ENCODE measurements at regions of chr6 and their contacts with region 1.

Region 1: GRCh38 chr6:42043787-42044475 is 6.4 kb upstream of the TAF8 start:
- DNase-seq: peak; percentile 86 to 94
- H3K4me3 ChIP-seq: no peak overlapping the region
- H3K27ac ChIP-seq: peak overlapping the region; percentile 90 to 96 (median 95)
- H3K4me1 ChIP-seq: peaks cover 45 to 56% of the 10 kb centered on the region in 2 donors
- H3K27me3 ChIP-seq: no peaks in the 10 kb centered on the region
- CTCF ChIP-seq: peak; percentile 91 to 98 (median 96)
- POLR2A ChIP-seq: no peak

Region 2: GRCh38 chr6:41779793-41780545 is 264.0 kb before region 1 on chr6 and contains the start of gene FRS3:
- intact Hi-C with region 1: loop called (anchors 5 kb)
- DNase-seq: peak; percentile 98 to 99
- H3K4me3 ChIP-seq: peak within 1 kb of the TSS in 2 of 3 donors; percentile 30 to 66
- H3K27ac ChIP-seq: peak within 1 kb of the TSS; percentile 83 to 86 (median 85)
- H3K4me1 ChIP-seq: peaks cover 20% of the 10 kb centered on the region in 2 donors
- H3K27me3 ChIP-seq: no peaks in the 10 kb centered on the region
- CTCF ChIP-seq: peak; percentile 70 to 99 (median 96)
- POLR2A ChIP-seq: peak in 1 of 2 donors; percentile 59
- total RNA-seq, gene FRS3: 4.0 to 6.7 (median 5.8) TPM

Region 3: GRCh38 chr6:41846666-41847237 is 197.2 kb before region 1 on chr6:
- intact Hi-C with region 1: loop called (anchors 5 kb)
- DNase-seq: peak; percentile 66 to 68
- H3K4me3 ChIP-seq: no peak overlapping the region
- H3K27ac ChIP-seq: peak overlapping the region in 2 of 3 donors; percentile 11 to 18
- H3K4me1 ChIP-seq: peaks cover 0 to 7% of the 10 kb centered on the region in 2 donors
- H3K27me3 ChIP-seq: no peaks in the 10 kb centered on the region
- CTCF ChIP-seq: peak; percentile 48 to 94 (median 84)
- POLR2A ChIP-seq: no peak

Region 4: DNA sequence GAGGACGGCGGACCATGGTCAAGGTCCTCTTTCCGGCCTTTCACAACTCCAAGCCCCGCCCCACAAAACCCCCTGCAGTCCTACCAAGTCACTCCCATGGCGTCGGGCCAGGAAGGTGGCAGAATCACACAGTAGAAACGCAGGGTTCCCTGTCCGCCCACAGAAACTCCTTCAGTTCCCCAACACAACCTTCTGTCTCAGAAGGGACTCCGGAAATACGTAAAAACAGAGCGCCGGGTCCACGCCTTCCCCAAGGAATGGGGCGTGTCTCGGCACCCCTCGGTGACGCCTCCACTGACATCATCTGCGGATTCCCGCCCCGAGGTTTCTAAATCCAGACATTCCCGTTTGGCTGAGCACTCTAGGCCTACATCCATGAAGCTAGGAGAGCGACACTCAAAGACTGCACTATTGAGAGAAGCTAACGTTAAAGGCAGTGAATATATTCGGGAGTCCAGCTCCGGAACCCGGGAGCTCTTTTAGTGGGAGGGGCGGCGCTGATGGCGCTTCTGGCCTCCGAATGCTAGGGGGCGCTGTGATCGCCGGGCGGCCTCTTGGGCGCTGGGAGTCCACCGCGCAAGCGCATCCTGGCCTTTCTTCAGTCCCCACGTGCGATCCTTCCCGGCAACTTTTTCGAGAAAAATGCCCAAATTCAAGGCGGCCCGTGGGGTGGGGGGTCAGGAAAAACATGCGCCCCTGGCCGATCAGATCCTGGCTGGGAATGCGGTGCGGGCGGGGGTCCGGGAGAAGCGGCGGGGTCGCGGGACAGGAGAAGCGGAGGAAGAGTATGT is 122.8 kb before region 1 on chr6 and contains the starts of genes BYSL and MED20:
- intact Hi-C with region 1: loop called (anchors 5 kb)
- DNase-seq: peak; percentile 92 to 93
- H3K4me3 ChIP-seq: peak within 1 kb of the TSS; percentile 13 to 85 (median 70)
- H3K27ac ChIP-seq: peak within 1 kb of the TSS; percentile 95 to 97 (median 96)
- H3K4me1 ChIP-seq: peaks cover 14 to 23% of the 10 kb centered on the region in 2 donors
- H3K27me3 ChIP-seq: no peaks in the 10 kb centered on the region
- CTCF ChIP-seq: peak; percentile 87 to 98 (median 97)
- POLR2A ChIP-seq: peak in 1 of 2 donors; percentile 72
- total RNA-seq, gene BYSL: 2.8 to 6.1 (median 4.2) TPM
- total RNA-seq, gene MED20: 20.6 to 27.1 (median 24.3) TPM

Region 5: DNA sequence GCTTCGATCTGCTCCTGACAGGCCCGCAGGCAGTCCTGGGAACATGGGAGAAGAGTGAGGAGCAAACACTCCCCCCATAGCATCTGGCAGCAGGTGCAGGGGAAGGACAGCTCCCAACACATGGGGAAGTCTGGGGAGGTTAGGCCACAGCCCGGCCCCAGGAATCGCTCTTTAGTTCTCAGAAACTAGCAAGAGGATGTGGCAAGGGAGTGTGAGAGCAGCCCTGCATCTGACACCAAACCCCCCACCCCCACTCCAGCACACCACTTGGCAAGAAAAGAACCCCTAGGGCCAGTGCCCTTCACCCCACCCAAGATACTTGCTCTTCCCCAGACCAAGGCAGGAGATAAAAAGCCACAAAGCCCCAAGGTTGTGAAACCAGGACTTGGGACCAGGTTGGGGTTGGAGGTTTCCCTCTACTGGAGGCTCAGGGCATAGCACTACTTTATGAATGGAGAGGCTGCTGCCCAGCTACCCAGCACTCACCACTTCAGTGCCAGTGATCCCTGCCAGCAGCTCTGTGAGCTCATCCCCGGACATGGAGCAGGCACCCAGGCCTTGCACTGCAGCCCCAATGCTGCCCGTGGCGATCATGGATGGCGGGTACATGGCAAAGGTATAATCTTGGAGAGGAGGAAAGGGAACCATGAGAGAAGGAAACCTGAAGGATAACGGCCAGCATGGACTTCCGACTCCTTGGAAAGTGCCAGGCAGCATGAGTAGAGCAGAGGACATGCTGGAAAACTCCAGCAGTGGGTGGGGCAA is 107.7 kb before region 1 on chr6:
- intact Hi-C with region 1: loop called (anchors 5 kb)
- DNase-seq: peak; percentile 83
- H3K4me3 ChIP-seq: no peak overlapping the region
- H3K27ac ChIP-seq: no peak overlapping the region
- H3K4me1 ChIP-seq: peaks cover 14 to 33% of the 10 kb centered on the region in 2 donors
- H3K27me3 ChIP-seq: no peaks in the 10 kb centered on the region
- CTCF ChIP-seq: peak; percentile 53 to 88 (median 74)
- POLR2A ChIP-seq: no peak